ENCODE measurements at regions of chr15 and their contacts with region 1.

Region 1: GRCh38 chr15:58498821-58499580 is 67.2 kb downstream of the LIPC start:
- DNase-seq: no peak
- H3K4me3 ChIP-seq: no peak overlapping the region
- H3K4me3 Mint-ChIP-seq: no peak overlapping the region
- H3K27ac Mint-ChIP-seq: no peak overlapping the region
- H3K4me1 ChIP-seq: peaks cover 5% of the 10 kb centered on the region; the same call in 1 of the 2 replicates
- H3K4me1 Mint-ChIP-seq: peaks cover 6% of the 10 kb centered on the region
- H3K27me3 ChIP-seq: no peaks in the 10 kb centered on the region
- H3K27me3 Mint-ChIP-seq: no peaks in the 10 kb centered on the region
- CTCF ChIP-seq: no peak

Region 2: GRCh38 chr15:58572521-58572920 is 73.5 kb after region 1 on chr15:
- CTCF ChIA-PET with region 1: interaction called, 10 read pairs
- POLR2A ChIA-PET with region 1: no interaction called
- intact Hi-C with region 1: no loop called
- DNase-seq: no peak
- H3K4me3 ChIP-seq: no peak overlapping the region
- H3K4me3 Mint-ChIP-seq: no peak overlapping the region
- H3K27ac Mint-ChIP-seq: peak overlapping the region; percentile 10
- H3K4me1 ChIP-seq: peaks cover 21% of the 10 kb centered on the region
- H3K4me1 Mint-ChIP-seq: peaks cover 21% of the 10 kb centered on the region
- H3K27me3 ChIP-seq: no peaks in the 10 kb centered on the region
- H3K27me3 Mint-ChIP-seq: no peaks in the 10 kb centered on the region
- CTCF ChIP-seq: no peak

Measured in Caco-2 (cell line).